ENCODE measurements at regions of chr10 and their contacts with region 1.

Region 1: GRCh38 chr10:80453701-80454513 is at the start of gene TSPAN14:
- DNase-seq: peak; percentile 66
- H3K4me3 ChIP-seq: peak within 1 kb of the TSS; percentile 82
- H3K27ac ChIP-seq: peak within 1 kb of the TSS; percentile 60
- H3K27me3 ChIP-seq: no peaks in the 10 kb centered on the region
- CTCF ChIP-seq: no peak

Region 2: DNA sequence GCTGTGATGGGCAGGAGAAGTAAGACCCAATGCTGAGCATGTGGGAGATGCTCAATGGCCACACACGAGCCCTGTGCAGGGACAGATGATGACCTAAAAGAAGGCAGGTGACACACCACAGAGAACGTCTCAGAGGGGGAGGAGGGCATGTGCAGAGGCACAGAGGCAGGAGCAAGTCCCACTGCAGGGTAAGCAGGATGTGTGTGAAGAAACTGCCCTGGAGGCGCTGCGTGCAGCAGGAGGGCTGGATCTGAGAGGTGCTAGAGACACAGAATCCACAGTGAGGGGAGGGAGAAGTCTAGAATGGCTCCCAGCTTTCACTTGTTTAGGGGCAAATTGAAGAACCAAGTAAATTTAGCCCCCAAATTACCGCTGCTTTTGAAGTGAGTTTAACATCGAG is 82.4 kb before region 1 on chr10:
- in situ Hi-C with region 1: no loop called
- DNase-seq: no peak
- H3K4me3 ChIP-seq: no peak overlapping the region
- H3K27ac ChIP-seq: no peak overlapping the region
- H3K27me3 ChIP-seq: no peaks in the 10 kb centered on the region
- CTCF ChIP-seq: no peak

Region 3: GRCh38 chr10:80500572-80501380 is 46.9 kb after region 1 on chr10:
- in situ Hi-C with region 1: loop called (anchors 10 kb)
- DNase-seq: peak; percentile 40
- H3K4me3 ChIP-seq: no peak overlapping the region
- H3K27ac ChIP-seq: peak overlapping the region; percentile 56
- H3K27me3 ChIP-seq: no peaks in the 10 kb centered on the region
- CTCF ChIP-seq: no peak